Activated CD4-positive, alpha-beta T cell treated with anti-CD3 and anti-CD28 coated beads, Interleukin-2, amount 10 ng/mL, durations not matched to agents 7 days and 5 days (primary cell): ENCODE measurements at regions of chr6 and their contacts with region 1.

Region 1: DNA sequence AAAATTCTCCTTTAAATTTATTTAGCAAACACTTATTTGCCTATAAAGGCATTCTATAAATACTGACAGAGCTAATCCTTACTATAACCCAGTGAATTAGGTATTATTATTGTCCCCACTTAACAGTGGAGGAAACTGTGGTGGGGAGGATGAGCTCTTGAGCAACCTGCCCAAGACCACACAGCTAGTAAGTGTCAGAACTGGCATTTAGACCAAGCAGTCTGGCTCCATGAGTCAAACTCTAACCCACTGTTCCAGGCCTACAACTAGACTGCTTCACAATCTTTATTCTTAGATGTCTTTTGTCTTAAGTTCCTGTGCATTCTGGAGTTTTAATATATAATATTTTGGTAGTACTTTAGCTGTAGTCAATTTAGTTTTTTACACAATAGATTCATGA is 530.8 kb downstream of the BCKDHB start:
- DNase-seq: no peak
- H3K4me3 Mint-ChIP-seq: no peak overlapping the region
- H3K27ac Mint-ChIP-seq: no peak overlapping the region
- H3K4me1 Mint-ChIP-seq: no peaks in the 10 kb centered on the region
- H3K27me3 Mint-ChIP-seq: no peaks in the 10 kb centered on the region

Region 2: DNA sequence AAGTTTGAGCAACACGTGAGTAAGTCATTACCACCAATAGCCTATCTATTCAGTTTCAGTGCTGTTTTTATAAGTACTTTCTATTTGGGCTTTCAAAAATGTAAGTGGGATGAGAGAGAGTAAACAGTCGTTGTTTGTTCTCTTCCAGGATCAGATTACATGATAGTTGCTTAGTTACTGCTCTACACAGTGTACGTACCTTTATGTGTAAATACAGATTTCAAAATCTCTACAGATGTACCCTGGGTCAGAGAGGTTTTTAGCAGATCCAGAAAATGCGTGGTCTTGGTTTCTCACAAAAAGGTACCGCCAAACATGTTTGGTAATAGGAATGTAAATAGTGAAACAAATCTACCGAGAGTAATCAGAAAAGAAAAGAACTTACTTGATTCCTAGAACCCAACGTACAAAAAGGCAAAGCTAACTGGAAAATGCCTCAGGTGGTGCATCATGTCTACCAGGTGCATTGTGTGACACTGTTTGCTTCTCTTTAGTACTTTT is 109.7 kb before region 1 on chr6:
- CTCF ChIA-PET with region 1: no interaction called
- POLR2A ChIA-PET with region 1: interaction called, 10 read pairs
- DNase-seq: no peak
- H3K4me3 Mint-ChIP-seq: no peak overlapping the region
- H3K27ac Mint-ChIP-seq: no peak overlapping the region
- H3K4me1 Mint-ChIP-seq: peaks cover 13% of the 10 kb centered on the region
- H3K27me3 Mint-ChIP-seq: peaks cover 5% of the 10 kb centered on the region